Caco-2 (cell line): ENCODE measurements at regions of chr4 and their contacts with region 1.

Region 1: DNA sequence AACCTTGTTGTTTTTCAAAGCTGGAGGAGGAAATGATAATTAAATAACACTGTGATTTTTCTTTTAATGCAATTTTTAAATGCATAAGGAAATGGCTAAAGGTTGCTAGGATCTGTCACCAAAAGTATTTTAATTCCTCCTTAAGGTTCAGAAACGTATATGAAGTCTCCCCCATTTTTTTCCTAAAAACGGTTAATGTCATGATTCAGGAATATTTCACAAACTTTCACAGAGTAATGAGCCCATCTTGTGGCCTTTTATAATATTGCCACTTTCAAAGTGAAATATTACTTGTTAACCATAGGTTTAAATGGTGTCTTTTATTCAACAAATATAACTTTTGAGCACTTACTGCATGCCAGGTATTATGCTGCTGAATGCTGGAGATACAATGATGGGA is 99.5 kb upstream of the USP38 start:
- DNase-seq: no peak
- H3K4me3 ChIP-seq: no peak overlapping the region
- H3K4me3 Mint-ChIP-seq: no peak overlapping the region
- H3K27ac Mint-ChIP-seq: no peak overlapping the region
- H3K4me1 ChIP-seq: peaks cover 56% of the 10 kb centered on the region
- H3K4me1 Mint-ChIP-seq: peaks cover 46% of the 10 kb centered on the region
- H3K27me3 ChIP-seq: no peaks in the 10 kb centered on the region
- H3K27me3 Mint-ChIP-seq: no peaks in the 10 kb centered on the region
- CTCF ChIP-seq: peak; percentile 34 to 57

Region 2: DNA sequence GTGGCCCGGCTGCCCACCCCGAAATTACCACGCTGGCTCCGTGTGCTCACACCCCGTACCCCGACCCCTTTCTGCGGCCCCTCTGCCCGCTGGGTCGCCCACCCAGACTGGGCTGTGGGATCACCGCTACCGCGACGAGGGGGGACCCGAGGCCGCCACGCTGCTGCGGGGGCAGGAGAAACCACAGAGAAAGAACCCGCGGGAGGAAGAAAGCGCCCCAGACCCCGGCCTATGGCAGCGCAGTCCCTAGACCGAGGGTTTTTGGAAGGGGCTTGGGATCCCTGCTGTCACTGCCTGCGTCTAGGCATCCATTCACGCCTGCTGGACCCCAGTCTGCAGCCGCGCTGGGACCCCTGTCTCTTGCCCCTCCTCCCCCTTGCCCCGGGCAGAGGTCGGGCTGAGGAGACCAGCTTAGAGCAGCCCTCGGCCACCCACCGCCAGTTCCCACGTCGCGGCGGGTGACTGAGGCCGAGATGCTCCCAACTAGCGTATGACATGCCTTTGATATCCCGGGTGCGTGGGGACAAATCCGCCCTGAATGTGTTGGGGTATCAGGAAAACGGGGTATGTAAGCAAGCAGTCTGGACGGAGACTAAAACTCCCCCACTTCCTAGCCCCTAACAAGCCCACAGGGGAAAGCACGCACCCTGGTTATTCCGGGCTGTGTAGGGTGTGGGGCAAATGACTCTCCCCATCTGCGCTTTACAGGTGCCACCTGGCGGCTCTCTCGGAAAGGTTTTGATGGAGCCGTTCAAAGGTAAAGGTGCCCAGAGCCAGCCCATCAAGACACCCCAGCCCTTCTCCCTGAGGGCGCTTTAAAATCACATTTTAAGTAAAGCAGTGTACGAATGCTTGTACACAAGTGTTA is 238.3 kb before region 1 on chr4:
- CTCF ChIA-PET with region 1: no interaction called
- POLR2A ChIA-PET with region 1: no interaction called
- intact Hi-C with region 1: loop called (anchors 10 kb)
- DNase-seq: peak; percentile 57 to 65
- H3K4me3 ChIP-seq: peak overlapping the region; percentile 31
- H3K4me3 Mint-ChIP-seq: peak overlapping the region; percentile 74
- H3K27ac Mint-ChIP-seq: no peak overlapping the region
- H3K4me1 ChIP-seq: peaks cover 4% of the 10 kb centered on the region; the same call in 1 of the 2 replicates
- H3K4me1 Mint-ChIP-seq: no peaks in the 10 kb centered on the region
- H3K27me3 ChIP-seq: 0 out of 2 replicates have a peak, but pooled peaks cover 1% of the 10 kb centered on the region
- H3K27me3 Mint-ChIP-seq: peaks cover 24% of the 10 kb centered on the region
- CTCF ChIP-seq: peak; percentile 61

Region 3: DNA sequence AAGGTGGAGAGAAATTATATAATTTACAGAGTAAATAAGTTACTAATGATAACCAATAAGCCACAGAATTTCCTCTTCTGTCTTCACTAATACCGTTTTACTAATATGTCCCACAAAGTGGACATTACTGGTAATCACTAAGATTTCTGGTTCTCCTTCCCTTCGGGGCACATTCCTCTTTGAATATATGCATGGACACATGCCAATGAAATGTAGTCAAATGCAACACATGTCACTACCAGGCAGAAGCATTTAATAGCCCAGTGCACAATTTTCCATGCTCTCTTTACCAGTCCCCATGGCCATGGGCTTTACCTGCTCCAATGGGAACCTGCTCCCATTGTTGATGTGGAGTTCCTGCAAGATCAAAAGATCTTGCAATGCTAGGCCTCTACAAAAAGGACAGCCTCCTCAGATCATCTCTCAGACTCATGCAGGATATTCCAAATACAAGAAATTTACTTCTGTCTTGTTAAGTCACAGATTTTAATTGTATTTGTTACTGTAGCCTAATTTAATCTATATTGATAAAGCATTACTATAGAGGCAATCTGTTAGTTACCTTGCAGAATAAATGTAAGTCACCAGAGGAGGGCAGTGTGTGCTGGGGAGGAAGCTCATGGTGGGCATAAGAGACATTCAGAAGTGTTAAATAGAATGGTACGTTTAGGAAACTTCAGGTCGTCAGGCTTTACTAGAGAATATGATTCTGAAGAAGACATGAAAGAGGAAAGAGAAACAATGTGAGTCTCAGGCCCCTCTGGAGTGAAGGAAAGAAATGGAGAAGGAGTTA is 202.0 kb before region 1 on chr4:
- CTCF ChIA-PET with region 1: no interaction called
- POLR2A ChIA-PET with region 1: no interaction called
- intact Hi-C with region 1: loop called (anchors 1 kb)
- DNase-seq: peak in 1 of 2 experiments; percentile 15
- H3K4me3 ChIP-seq: no peak overlapping the region
- H3K4me3 Mint-ChIP-seq: no peak overlapping the region
- H3K27ac Mint-ChIP-seq: no peak overlapping the region
- H3K4me1 ChIP-seq: no peaks in the 10 kb centered on the region
- H3K4me1 Mint-ChIP-seq: no peaks in the 10 kb centered on the region
- H3K27me3 ChIP-seq: no peaks in the 10 kb centered on the region
- H3K27me3 Mint-ChIP-seq: no peaks in the 10 kb centered on the region
- CTCF ChIP-seq: peak; percentile 22 to 37

Region 4: GRCh38 chr4:142984871-142985585 is 100.2 kb before region 1 on chr4:
- CTCF ChIA-PET with region 1: interaction called, 35 read pairs
- POLR2A ChIA-PET with region 1: no interaction called
- intact Hi-C with region 1: loop called (anchors 1 kb)
- DNase-seq: peak in 1 of 2 experiments; percentile 64
- H3K4me3 ChIP-seq: no peak overlapping the region
- H3K4me3 Mint-ChIP-seq: no peak overlapping the region
- H3K27ac Mint-ChIP-seq: no peak overlapping the region
- H3K4me1 ChIP-seq: no peaks in the 10 kb centered on the region
- H3K4me1 Mint-ChIP-seq: peaks cover 13% of the 10 kb centered on the region
- H3K27me3 ChIP-seq: no peaks in the 10 kb centered on the region
- H3K27me3 Mint-ChIP-seq: no peaks in the 10 kb centered on the region
- CTCF ChIP-seq: peak; percentile 61 to 71

Region 5: DNA sequence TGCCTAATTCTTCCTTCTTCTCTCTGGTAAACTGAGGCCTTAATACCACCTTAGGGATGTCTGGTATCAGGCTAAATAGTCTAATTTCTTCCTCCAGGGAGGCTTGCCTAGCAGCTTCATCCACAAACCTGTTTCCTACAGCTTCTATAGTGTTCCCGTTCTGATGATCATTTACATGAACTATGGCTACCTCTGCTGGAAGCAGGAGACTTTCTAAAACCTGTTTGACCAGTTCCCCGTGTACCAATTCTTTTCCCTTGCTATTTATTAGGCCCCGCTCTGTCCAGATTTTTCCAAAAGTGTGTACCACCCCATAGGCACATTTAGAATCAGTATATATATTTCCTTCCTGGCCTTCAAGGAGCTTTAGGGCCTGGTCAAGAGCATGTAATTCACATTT is 93.7 kb after region 1 on chr4:
- CTCF ChIA-PET with region 1: interaction called, 3 read pairs
- POLR2A ChIA-PET with region 1: interaction called, 5 read pairs
- intact Hi-C with region 1: loop called (anchors 1 kb)
- DNase-seq: peak; percentile 44 to 68
- H3K4me3 ChIP-seq: no peak overlapping the region
- H3K4me3 Mint-ChIP-seq: no peak overlapping the region
- H3K27ac Mint-ChIP-seq: no peak overlapping the region
- H3K4me1 ChIP-seq: peaks cover 17% of the 10 kb centered on the region
- H3K4me1 Mint-ChIP-seq: peaks cover 14% of the 10 kb centered on the region
- H3K27me3 ChIP-seq: no peaks in the 10 kb centered on the region
- H3K27me3 Mint-ChIP-seq: no peaks in the 10 kb centered on the region
- CTCF ChIP-seq: peak in 1 of 2 experiments; percentile 32

Region 6: GRCh38 chr4:143482840-143483239 is 397.6 kb after region 1 on chr4:
- CTCF ChIA-PET with region 1: no interaction called
- POLR2A ChIA-PET with region 1: no interaction called
- intact Hi-C with region 1: loop called (anchors 1 kb)
- DNase-seq: peak in 1 of 2 experiments; percentile 42
- H3K4me3 ChIP-seq: no peak overlapping the region
- H3K4me3 Mint-ChIP-seq: no peak overlapping the region
- H3K27ac Mint-ChIP-seq: no peak overlapping the region
- H3K4me1 ChIP-seq: no peaks in the 10 kb centered on the region
- H3K4me1 Mint-ChIP-seq: no peaks in the 10 kb centered on the region
- H3K27me3 ChIP-seq: no peaks in the 10 kb centered on the region
- H3K27me3 Mint-ChIP-seq: no peaks in the 10 kb centered on the region
- CTCF ChIP-seq: peak; percentile 40 to 46